MCF 10A (cell line): ENCODE measurements at regions of chr5 and their contacts with region 1.

Region 1: DNA sequence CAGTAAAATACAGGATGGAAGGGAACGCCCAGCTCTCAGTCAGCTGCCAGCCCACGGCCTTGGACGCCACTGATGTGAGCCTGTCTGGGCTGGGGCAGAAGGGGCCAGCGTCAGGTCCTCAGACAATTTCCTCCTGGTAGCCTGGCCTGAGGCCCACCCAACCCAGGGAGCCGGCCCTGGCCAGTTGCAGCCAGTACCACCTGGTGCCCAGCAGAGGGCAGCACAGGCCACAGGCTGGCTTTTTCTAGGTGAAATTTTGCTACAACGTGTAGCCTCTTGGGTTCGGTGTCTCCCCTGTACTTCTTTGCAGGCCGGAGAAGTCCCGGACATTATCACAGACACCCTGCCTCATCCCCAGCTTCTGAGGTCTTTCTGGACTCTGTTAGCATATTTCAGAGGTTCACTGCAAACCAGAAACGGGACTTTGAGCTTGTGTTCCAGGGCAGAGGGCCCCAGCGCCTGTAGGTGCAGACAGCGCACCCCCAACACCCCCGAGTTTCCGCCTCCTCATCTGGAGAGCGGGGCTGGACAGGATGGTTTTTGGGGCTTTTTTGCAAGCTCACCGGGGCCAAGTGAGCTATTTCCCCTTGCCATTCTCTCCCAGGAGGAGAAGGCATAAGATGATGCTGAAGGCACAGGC is 45.9 kb upstream of the KCNMB1 start:
- DNase-seq: peak; percentile 74
- H3K4me3 Mint-ChIP-seq: no peak overlapping the region
- H3K27ac Mint-ChIP-seq: no peak overlapping the region
- H3K4me1 Mint-ChIP-seq: no peaks in the 10 kb centered on the region
- H3K27me3 Mint-ChIP-seq: peaks cover 23% of the 10 kb centered on the region
- CTCF ChIP-seq: peak; percentile 99

Region 2: GRCh38 chr5:170393235-170393634 is 41.9 kb before region 1 on chr5:
- CTCF ChIA-PET with region 1: no interaction called
- POLR2A ChIA-PET with region 1: no interaction called
- intact Hi-C with region 1: no loop called
- DNase-seq: no peak
- H3K4me3 Mint-ChIP-seq: no peak overlapping the region
- H3K27ac Mint-ChIP-seq: no peak overlapping the region
- H3K4me1 Mint-ChIP-seq: no peaks in the 10 kb centered on the region
- H3K27me3 Mint-ChIP-seq: peaks cover 32% of the 10 kb centered on the region
- CTCF ChIP-seq: no peak

Region 3: DNA sequence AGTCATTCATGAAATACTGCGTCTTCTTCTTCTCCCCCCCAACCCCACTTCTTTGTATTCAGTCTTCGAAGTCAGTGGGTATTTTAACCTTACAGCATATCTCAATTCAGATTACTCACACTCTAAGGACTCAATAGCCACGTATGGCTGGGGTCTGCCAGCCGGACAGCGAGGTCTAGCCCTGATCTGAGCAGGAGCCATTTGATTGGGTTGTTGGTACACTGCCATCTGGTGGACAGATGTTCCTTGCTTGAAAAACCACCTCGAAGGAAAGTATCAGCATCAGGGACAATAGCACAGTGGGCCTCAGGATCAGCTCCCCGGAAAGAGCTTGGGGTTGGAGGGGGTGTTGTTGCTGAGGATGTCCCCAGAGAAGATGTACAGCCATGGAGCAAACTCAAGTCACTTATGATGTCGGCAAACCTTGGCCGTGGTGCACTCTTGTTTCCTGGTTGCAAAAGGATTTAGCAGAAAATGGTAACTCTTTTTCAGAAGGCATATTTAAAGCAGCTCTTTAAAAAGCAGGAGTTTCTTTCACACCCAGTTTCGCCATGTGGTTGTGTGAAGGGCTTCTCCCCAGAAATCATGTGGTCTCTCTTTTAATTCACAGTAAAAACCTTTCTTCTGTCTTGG is 14.2 kb before region 1 on chr5:
- CTCF ChIA-PET with region 1: interaction called, 122 read pairs
- POLR2A ChIA-PET with region 1: no interaction called
- intact Hi-C with region 1: no loop called
- DNase-seq: peak; percentile 82
- H3K4me3 Mint-ChIP-seq: no peak overlapping the region
- H3K27ac Mint-ChIP-seq: no peak overlapping the region
- H3K4me1 Mint-ChIP-seq: no peaks in the 10 kb centered on the region
- H3K27me3 Mint-ChIP-seq: peaks cover 45% of the 10 kb centered on the region
- CTCF ChIP-seq: peak; percentile 78

Region 4: DNA sequence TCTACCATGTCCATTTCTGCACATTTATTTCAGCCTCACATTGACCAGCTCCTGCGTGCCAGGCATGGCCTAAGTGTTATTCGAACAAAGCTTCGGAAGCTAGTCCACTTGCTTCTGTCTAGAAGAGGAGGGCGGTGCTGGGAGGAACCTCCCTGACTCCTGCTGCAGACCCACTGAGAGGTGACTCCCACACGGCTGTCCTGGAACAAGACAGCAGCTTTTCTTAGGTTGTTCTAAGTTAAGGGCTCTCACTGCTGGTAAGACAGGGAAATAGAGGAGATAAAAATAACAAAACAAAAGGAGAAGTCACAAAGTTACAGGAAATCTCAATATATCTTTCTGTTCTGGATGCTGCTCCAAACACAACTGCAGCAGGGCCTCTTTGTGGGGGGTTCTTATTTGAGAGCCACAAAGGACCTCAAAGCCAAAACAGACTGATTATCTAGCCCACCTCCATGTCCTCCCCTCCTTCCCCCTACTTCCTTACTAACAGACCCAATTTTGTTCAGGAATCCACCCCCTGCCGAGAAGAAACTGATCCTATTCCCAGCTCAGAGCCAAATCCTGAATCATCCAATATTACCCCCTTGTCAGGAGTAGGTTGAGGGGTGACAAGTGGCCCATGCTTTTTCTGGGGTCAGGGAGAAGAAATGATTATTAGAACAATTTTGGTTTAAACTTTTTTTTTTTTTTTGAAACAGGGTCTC is 40.4 kb after region 1 on chr5:
- CTCF ChIA-PET with region 1: interaction called, 10 read pairs
- POLR2A ChIA-PET with region 1: no interaction called
- intact Hi-C with region 1: no loop called
- DNase-seq: no peak
- H3K4me3 Mint-ChIP-seq: no peak overlapping the region
- H3K27ac Mint-ChIP-seq: no peak overlapping the region
- H3K4me1 Mint-ChIP-seq: no peaks in the 10 kb centered on the region
- H3K27me3 Mint-ChIP-seq: no peaks in the 10 kb centered on the region
- CTCF ChIP-seq: no peak

Region 5: DNA sequence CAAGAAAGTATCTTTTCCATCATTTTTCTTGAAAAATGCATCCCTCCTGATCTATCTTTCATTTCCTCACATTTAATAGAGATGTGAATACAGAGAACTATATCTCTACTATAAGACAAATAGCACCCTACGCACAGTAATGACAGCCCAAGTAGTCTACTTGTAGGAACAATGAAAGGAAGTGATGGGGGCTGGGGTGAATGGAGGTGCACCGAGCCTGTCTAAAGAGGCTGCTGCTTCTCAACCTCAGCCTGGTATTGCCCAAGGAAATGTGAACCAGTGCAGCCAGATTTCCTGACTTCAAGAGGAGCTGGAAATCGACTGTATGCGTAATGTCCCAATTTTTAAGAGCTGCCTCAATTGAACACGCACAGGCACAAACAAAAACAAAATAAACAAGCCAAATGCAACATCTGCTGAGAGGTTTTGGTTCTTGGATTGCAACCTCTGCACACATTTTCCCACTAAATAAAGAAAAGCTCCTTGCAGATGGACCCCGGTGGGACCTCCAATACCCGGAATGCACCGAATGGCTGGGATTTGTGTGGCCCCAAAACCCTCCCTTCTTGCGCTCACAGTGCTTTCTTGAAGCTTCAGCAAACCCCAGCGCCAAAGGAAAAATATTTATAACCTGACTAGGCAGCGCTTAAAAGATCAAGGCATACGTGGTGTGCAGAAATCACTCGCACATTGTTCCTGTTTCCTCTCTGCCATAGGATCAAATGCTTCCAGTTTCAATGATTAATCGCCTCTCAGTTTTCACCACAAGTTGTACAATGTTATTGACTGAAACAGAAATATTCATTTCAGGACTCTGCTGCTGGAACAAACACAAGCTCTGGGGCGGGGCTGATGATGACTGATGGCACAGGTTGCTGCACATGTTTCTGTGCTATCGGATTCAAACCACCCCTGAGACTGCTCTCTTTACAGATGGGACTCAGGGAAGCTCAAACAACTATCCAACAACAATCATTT is 137.1 kb after region 1 on chr5:
- CTCF ChIA-PET with region 1: interaction called, 18 read pairs
- POLR2A ChIA-PET with region 1: no interaction called
- intact Hi-C with region 1: loop called (anchors 5 kb)
- DNase-seq: no peak
- H3K4me3 Mint-ChIP-seq: no peak overlapping the region
- H3K27ac Mint-ChIP-seq: no peak overlapping the region
- H3K4me1 Mint-ChIP-seq: peaks cover 5% of the 10 kb centered on the region
- H3K27me3 Mint-ChIP-seq: peaks cover 63% of the 10 kb centered on the region
- CTCF ChIP-seq: no peak

Region 6: DNA sequence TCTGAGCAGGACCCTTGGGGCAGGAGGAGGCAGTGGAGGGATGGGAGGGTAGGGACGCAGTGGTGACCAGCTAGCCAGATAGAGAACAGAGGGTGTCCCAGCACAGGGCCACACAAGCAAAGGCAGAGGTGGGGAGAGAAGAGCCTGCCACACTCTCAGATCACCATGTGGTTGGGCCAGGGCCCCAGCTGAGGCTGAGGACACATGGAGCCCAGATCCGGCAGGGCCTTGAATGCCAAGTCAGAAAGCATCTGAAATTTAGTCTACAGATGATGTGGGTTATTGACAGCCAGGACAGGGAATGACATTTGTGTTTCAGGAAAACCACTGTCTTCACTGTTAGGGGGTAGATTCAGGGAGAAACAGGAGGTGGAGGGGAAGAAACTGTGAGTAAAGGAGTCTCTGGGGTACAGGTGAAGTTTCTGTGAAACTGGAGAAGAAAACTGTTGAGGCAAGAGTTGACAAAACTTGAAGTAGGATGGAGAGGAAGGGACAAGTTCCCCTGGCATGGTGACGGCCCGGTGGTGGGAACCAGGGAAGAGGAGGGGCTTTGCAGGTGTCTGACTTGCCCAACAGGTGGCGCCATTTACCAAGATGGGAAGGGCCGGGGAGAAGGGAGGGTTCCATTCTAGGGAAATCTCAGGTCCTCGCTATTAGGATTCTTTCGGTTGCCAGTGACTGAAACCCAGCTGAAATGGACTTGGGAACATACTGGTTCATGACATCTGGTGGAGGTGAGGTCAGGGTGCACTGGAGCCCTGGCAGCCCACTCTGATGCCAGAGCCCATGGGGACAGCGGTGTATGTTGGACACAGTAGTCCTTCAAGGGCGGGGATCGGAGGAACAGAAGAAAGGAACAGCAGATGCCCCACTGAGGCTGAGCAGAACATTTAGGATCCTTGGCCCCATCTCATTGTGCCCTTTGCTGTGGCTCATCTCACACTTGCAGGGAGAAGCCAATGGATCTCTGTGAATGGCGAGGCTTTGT is 168.8 kb after region 1 on chr5:
- CTCF ChIA-PET with region 1: interaction called, 93 read pairs
- POLR2A ChIA-PET with region 1: interaction called, 3 read pairs
- intact Hi-C with region 1: no loop called
- DNase-seq: peak; percentile 86
- H3K4me3 Mint-ChIP-seq: no peak overlapping the region
- H3K27ac Mint-ChIP-seq: no peak overlapping the region
- H3K4me1 Mint-ChIP-seq: peaks cover 5% of the 10 kb centered on the region
- H3K27me3 Mint-ChIP-seq: peaks cover 51% of the 10 kb centered on the region
- CTCF ChIP-seq: peak; percentile 97

Region 7: GRCh38 chr5:170623576-170624181 is 188.6 kb after region 1 on chr5:
- CTCF ChIA-PET with region 1: interaction called, 418 read pairs
- POLR2A ChIA-PET with region 1: interaction called, 4 read pairs
- intact Hi-C with region 1: loop called (anchors 1 kb)
- DNase-seq: peak; percentile 78
- H3K4me3 Mint-ChIP-seq: no peak overlapping the region
- H3K27ac Mint-ChIP-seq: no peak overlapping the region
- H3K4me1 Mint-ChIP-seq: no peaks in the 10 kb centered on the region
- H3K27me3 Mint-ChIP-seq: peaks cover 27% of the 10 kb centered on the region
- CTCF ChIP-seq: peak; percentile 97

Region 8: GRCh38 chr5:170638454-170639220 is 203.6 kb after region 1 on chr5:
- CTCF ChIA-PET with region 1: interaction called, 226 read pairs
- POLR2A ChIA-PET with region 1: no interaction called
- intact Hi-C with region 1: loop called (anchors 2 kb)
- DNase-seq: peak; percentile 84
- H3K4me3 Mint-ChIP-seq: no peak overlapping the region
- H3K27ac Mint-ChIP-seq: no peak overlapping the region
- H3K4me1 Mint-ChIP-seq: peaks cover 19% of the 10 kb centered on the region
- H3K27me3 Mint-ChIP-seq: no peaks in the 10 kb centered on the region
- CTCF ChIP-seq: peak; percentile 98